Activated T-helper 1 cell treated with anti-CD3 and anti-CD28 coated beads, Interleukin-12 subunit alpha, Interleukin-12 subunit beta, Interleukin-2, Interleukin-4 antibody, amounts not matched to agents 30 ng/mL and 10 ng/mL and 1 ng/mL, durations not matched to agents 14 hours and 24 hours and 36 hours (primary cell): ENCODE measurements at regions of chr1 and their contacts with region 1.

Region 1: GRCh38 chr1:169601093-169601881 is 15.0 kb upstream of the F5 start:
- DNase-seq: no peak
- H3K4me3 Mint-ChIP-seq: no peak overlapping the region
- H3K27ac Mint-ChIP-seq: peak overlapping the region; percentile 57
- H3K4me1 Mint-ChIP-seq: peaks cover 51% of the 10 kb centered on the region
- H3K27me3 Mint-ChIP-seq: no peaks in the 10 kb centered on the region

Region 2: GRCh38 chr1:169102567-169102966 is 498.7 kb before region 1 on chr1:
- intact Hi-C with region 1: no loop called
- DNase-seq: no peak
- H3K4me3 Mint-ChIP-seq: no peak overlapping the region
- H3K27ac Mint-ChIP-seq: no peak overlapping the region
- H3K4me1 Mint-ChIP-seq: peaks cover 19% of the 10 kb centered on the region
- H3K27me3 Mint-ChIP-seq: peaks cover 5% of the 10 kb centered on the region

Region 3: DNA sequence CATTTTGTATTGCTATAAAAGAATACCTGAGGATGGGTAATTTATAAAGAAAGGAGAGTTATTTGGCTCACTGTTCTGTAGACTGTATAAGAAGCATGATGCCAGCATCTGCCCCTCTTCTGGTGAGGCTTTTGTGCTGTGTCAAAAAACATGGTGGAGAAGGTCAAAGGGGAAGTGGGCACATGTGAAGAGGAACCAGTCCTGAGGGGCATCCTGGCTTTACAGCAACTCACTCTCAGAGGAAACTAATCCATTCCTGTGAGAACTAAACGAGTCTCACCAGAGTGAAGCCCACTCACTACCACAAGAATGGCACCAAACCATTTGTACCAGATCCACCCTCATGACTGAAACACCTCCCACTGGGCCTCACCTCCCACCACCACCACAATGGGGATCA is 47.4 kb after region 1 on chr1:
- intact Hi-C with region 1: loop called (anchors 5 kb)
- DNase-seq: no peak
- H3K4me3 Mint-ChIP-seq: no peak overlapping the region
- H3K27ac Mint-ChIP-seq: no peak overlapping the region
- H3K4me1 Mint-ChIP-seq: peaks cover 24% of the 10 kb centered on the region
- H3K27me3 Mint-ChIP-seq: no peaks in the 10 kb centered on the region

Region 4: DNA sequence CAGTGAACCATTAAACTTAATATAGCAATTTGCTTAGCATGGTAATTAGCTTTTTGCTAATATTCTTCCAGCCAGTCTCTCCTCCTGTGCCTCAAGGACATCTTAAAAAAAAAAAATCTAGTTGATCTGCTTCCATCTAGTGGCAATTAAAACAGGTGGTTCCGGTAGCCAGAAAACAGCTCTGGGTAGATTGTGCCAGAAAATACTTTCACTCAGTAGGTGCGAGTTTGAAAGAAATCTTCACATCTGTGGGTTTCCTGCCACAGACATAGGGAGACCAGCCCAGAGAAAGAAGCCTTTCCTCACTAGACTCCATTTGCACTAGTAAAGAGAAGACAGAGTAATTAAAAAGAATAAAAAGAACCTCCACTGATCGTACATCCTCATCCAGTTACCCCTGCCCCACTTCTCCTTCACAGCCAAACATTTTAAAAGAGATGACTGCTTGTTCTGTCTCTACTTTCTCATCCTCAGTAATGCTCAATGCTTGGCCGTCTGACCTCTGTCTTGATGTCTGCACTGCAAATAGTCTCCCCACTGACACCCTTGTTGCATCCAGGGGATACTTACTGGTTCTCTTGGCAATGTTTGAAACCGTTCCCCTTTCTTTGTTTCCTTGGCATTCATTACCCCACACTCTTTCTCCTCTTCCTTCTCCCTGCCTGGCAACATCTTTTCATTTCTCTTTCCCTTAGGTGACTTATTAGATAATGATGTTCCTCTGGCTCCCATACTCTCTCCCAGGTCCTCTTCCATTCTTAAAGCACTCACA is 93.2 kb after region 1 on chr1:
- intact Hi-C with region 1: loop called (anchors 1 kb)
- DNase-seq: peak; percentile 56
- H3K4me3 Mint-ChIP-seq: peak overlapping the region; percentile 28
- H3K27ac Mint-ChIP-seq: peak overlapping the region; percentile 90
- H3K4me1 Mint-ChIP-seq: peaks cover 96% of the 10 kb centered on the region
- H3K27me3 Mint-ChIP-seq: no peaks in the 10 kb centered on the region

Region 5: GRCh38 chr1:169809370-169810095 is 208.2 kb after region 1 on chr1:
- intact Hi-C with region 1: loop called (anchors 1 kb)
- DNase-seq: no peak
- H3K4me3 Mint-ChIP-seq: no peak overlapping the region
- H3K27ac Mint-ChIP-seq: no peak overlapping the region
- H3K4me1 Mint-ChIP-seq: peaks cover 10% of the 10 kb centered on the region
- H3K27me3 Mint-ChIP-seq: no peaks in the 10 kb centered on the region

Region 6: DNA sequence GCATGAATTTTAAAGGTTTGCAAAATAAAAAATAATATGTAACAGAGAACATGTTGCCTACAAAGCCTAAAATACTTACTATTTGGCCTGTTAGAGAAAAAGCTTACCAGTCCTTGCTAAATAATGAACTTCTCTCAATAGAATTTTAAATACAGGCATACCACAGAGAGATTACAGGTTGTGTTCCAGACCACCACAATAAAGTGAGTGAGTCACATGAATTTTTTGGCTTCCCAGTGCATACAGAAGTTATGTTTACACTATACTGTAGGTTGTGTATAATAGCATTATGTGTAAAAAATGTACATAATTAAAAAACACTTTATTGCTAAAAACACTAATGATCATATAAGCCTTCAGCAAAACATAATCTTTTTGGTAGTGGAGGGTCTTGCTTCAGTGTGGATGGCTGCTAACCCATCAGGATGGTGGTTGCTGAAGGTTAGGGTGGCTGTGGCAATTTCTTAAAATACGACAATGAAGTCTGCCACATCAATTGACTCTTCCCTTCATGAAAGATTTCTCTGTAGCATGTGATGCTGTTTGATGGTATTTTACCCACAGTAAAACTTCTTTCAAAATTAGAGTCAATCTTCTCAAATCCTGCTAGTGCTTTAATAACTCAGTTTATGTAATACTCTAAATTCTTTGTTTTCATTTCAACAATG is 243.8 kb after region 1 on chr1:
- intact Hi-C with region 1: no loop called
- DNase-seq: no peak
- H3K4me3 Mint-ChIP-seq: no peak overlapping the region
- H3K27ac Mint-ChIP-seq: no peak overlapping the region
- H3K4me1 Mint-ChIP-seq: peaks cover 14% of the 10 kb centered on the region
- H3K27me3 Mint-ChIP-seq: no peaks in the 10 kb centered on the region